ENCODE measurements at regions of chr4 and their contacts with region 1.

Region 1: GRCh38 chr4:168831919-168832762 is 177.9 kb downstream of the CBR4 start:
- DNase-seq: peak; percentile 51
- H3K4me3 Mint-ChIP-seq: peak overlapping the region; percentile 84
- H3K27ac Mint-ChIP-seq: peak overlapping the region; percentile 55
- H3K4me1 Mint-ChIP-seq: peaks cover 18% of the 10 kb centered on the region
- H3K27me3 Mint-ChIP-seq: peaks cover 46% of the 10 kb centered on the region

Region 2: DNA sequence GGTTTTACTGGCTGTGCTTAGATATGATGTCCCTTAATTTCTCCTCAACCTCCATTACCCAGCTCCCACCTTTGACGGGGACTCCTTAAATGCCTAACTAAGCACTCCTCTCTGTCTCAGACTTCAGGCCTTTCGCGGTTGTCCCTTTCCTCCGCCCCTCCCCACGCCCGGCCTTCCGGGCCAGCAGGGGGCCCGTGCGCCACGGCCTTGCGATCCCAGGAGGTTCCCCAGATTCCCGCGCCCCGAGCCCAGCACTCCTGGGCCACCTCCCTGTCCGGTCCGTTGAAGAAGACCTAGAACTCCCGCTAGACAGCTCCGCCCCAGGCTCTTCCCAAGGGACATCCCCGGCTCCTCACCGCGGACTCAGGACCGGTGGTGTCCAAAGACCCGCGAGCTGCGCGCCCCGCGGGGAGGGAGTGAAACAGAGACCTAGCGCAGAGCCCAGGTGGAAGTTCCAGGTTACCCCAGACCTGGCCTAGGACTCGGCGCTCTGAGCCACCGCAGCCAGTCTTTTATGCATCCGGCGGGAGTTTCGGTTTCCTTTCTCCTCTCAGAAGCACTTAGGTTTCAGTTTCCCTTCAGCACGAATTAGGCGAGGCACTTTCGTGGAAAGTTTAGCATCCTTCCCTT is 513.8 kb before region 1 on chr4 and contains the start of gene DDX60:
- intact Hi-C with region 1: loop called (anchors 2 kb)
- DNase-seq: peak; percentile 85
- H3K4me3 Mint-ChIP-seq: peak within 1 kb of the TSS; percentile 90
- H3K27ac Mint-ChIP-seq: peak within 1 kb of the TSS; percentile 88
- H3K4me1 Mint-ChIP-seq: peaks cover 60% of the 10 kb centered on the region
- H3K27me3 Mint-ChIP-seq: peaks cover 1% of the 10 kb centered on the region
- total RNA-seq, gene DDX60: 10.6 and 15.2 TPM in 2 replicates

Region 3: DNA sequence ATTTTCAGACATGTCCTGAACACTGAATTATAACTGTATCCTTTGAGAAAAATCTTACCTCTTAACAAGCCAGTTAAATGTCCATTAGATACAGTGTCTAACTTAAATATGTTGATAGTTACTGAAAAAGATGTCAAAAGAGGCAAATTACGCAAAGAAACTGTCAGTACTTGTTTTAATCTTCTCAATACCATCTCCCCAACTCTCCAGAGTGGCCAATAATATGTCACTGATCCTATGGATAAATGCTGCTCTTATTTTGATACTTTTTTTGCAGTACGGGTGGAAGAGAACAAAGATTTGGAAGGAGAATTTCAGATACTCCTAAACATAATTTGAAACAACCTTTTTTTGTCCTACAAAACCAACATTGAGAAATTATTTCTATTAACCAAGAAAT is 14.8 kb before region 1 on chr4:
- intact Hi-C with region 1: loop called (anchors 1 kb)
- DNase-seq: no peak
- H3K4me3 Mint-ChIP-seq: no peak overlapping the region
- H3K27ac Mint-ChIP-seq: no peak overlapping the region
- H3K4me1 Mint-ChIP-seq: peaks cover 13% of the 10 kb centered on the region
- H3K27me3 Mint-ChIP-seq: peaks cover 45% of the 10 kb centered on the region

Region 4: DNA sequence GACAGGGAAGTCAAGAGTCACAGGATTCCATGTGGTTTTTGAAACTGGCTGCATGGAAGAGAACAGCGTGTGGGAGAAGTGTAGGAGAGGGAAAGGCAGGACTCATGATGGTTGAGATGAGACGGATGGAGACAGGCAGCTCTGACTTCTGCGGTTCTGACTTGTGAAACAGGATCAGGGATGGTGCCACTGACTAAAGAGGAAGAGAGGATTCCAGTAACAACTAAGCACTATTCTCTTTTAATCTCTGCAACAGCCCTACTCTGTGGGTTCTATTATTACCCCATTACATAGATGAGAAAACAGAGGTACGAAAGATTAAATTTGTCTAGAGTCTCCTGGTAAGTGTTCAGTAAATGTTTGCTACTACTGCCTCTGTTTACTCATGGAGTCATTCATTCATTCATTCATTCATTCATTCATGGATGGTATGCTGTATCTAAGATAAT is 21.7 kb after region 1 on chr4:
- intact Hi-C with region 1: loop called (anchors 2 kb)
- DNase-seq: no peak
- H3K4me3 Mint-ChIP-seq: peak overlapping the region; percentile 28
- H3K27ac Mint-ChIP-seq: peak overlapping the region; percentile 54
- H3K4me1 Mint-ChIP-seq: peaks cover 24% of the 10 kb centered on the region
- H3K27me3 Mint-ChIP-seq: no peaks in the 10 kb centered on the region

Region 5: GRCh38 chr4:168864821-168865541 is 32.8 kb after region 1 on chr4:
- intact Hi-C with region 1: loop called (anchors 5 kb)
- DNase-seq: no peak
- H3K4me3 Mint-ChIP-seq: no peak overlapping the region
- H3K27ac Mint-ChIP-seq: no peak overlapping the region
- H3K4me1 Mint-ChIP-seq: peaks cover 52% of the 10 kb centered on the region
- H3K27me3 Mint-ChIP-seq: no peaks in the 10 kb centered on the region

Region 6: DNA sequence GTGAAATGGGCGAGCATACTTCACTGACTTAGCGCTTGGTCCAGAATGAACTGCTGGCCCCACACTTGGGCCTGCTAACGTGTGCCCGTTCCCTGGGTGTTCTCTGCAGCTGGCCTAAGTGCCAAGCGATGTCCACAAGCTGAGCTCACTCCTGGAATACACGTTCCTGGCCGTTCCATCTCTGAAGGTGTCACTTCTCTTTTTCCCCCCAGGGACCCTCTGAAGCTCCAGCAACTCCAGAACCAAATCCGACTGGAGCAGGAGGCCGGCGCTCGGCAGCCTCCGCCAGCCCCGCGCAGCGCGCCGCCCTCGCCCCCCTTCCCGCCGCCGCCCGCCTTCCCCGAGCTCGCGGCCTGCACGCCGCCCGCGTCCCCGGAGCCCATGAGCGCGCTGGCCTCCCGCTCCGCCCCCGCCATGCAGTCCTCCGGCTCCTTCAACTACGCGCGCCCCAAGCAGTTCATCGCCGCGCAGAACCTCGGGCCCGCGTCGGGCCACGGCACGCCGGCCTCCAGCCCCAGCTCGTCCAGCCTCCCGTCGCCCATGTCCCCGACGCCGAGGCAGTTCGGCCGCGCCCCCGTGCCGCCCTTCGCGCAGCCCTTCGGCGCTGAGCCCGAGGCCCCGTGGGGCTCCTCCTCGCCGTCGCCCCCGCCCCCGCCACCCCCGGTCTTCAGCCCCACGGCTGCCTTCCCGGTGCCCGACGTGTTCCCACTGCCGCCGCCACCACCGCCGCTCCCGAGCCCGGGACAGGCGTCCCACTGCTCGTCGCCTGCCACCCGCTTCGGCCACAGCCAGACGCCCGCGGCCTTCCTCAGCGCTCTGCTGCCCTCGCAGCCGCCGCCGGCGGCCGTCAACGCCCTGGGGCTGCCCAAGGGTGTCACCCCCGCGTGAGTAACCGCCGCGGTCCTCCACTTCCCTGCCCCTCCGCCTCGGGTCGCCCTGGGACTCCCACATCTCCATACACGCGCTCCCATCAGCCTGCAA is 45.7 kb after region 1 on chr4:
- intact Hi-C with region 1: loop called (anchors 1 kb)
- DNase-seq: no peak
- H3K4me3 Mint-ChIP-seq: peak overlapping the region; percentile 84
- H3K27ac Mint-ChIP-seq: peak overlapping the region; percentile 75
- H3K4me1 Mint-ChIP-seq: peaks cover 27% of the 10 kb centered on the region
- H3K27me3 Mint-ChIP-seq: peaks cover 41% of the 10 kb centered on the region

Region 7: GRCh38 chr4:168917138-168917779 is 85.1 kb after region 1 on chr4:
- intact Hi-C with region 1: loop called (anchors 5 kb)
- DNase-seq: no peak
- H3K4me3 Mint-ChIP-seq: no peak overlapping the region
- H3K27ac Mint-ChIP-seq: no peak overlapping the region
- H3K4me1 Mint-ChIP-seq: no peaks in the 10 kb centered on the region
- H3K27me3 Mint-ChIP-seq: peaks cover 2% of the 10 kb centered on the region

Region 8: DNA sequence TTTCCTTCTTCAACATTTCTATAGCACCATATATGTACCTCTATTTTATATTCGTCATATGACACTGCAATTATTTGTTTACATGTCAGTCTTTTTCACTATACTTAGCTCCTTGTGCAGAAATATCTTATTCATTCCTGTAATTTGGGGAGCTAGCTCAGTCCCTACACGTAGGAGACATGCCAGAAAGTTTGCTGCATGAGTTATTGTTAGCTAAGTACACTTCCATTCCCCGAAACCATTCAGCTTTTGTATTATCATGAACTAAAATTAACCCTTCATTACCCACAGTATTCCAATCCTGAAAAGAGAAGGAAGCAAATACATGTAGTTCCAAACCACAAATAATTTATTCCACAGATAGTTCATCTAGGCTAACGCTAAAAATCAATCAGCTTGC is 167.7 kb after region 1 on chr4:
- intact Hi-C with region 1: no loop called
- DNase-seq: no peak
- H3K4me3 Mint-ChIP-seq: no peak overlapping the region
- H3K27ac Mint-ChIP-seq: no peak overlapping the region
- H3K4me1 Mint-ChIP-seq: no peaks in the 10 kb centered on the region
- H3K27me3 Mint-ChIP-seq: no peaks in the 10 kb centered on the region

Measured in activated T-helper 1 cell treated with anti-CD3 and anti-CD28 coated beads, Interleukin-12 subunit alpha, Interleukin-12 subunit beta, Interleukin-2, Interleukin-4 antibody, amounts not matched to agents 30 ng/mL and 10 ng/mL and 1 ng/mL, durations not matched to agents 14 hours and 24 hours and 36 hours (primary cell).